Stomach (tissue), 19 donors: ENCODE measurements at regions of chr3 and their contacts with region 1.

Region 1: DNA sequence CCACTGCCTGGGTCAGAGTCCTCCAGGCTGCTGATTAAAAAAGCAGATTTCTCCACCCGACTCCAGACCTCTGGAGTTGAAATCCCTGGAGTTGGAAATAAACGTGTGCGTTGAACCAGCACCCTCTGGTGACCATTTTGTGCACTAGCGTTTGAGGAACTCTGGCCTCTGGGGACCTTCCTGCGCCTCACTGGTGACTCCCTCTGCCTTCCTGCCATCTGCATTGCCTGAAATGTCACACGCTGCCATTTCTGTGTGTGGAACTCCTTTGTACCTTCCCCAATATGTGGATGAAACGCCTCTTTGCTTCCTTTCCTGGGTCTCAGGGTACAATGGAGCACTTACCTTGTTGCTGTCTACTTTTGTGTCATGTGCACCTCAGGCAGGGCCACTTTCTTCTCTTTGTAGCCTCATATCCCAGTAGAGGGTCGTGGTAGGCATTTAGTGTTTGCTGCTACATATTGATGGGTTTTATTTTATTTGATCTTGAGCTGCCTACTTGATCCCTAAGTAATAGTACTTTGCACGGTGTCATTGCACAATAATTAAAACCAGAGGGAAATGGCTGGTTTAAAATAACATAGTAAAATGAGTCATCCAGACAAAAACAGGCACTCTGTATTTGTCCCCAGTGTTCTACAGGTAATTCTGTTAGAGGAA is 56.8 kb downstream of the GPR171 start:
- DNase-seq: peak; percentile 72 to 94
- H3K4me3 ChIP-seq: no peak overlapping the region
- H3K27ac ChIP-seq: no peak overlapping the region
- H3K4me1 ChIP-seq: peaks cover 0 to 18% (median 6%) of the 10 kb centered on the region in 4 donors
- H3K27me3 ChIP-seq: no peaks in the 10 kb centered on the region
- CTCF ChIP-seq: peak in 5 of 7 experiments; percentile 79 to 84 (median 81)
- EP300 ChIP-seq: no peak
- POLR2A ChIP-seq: no peak

Region 2: GRCh38 chr3:150787741-150788370 is 358.3 kb before region 1 on chr3:
- intact Hi-C with region 1: loop called (anchors 10 kb)
- DNase-seq: peak; percentile 88 to 92
- H3K4me3 ChIP-seq: no peak overlapping the region
- H3K27ac ChIP-seq: no peak overlapping the region
- H3K4me1 ChIP-seq: peaks cover 0 to 8% (median 3%) of the 10 kb centered on the region in 4 donors
- H3K27me3 ChIP-seq: no peaks in the 10 kb centered on the region
- CTCF ChIP-seq: peak in 5 of 7 experiments; percentile 79 to 86 (median 86)
- EP300 ChIP-seq: no peak
- POLR2A ChIP-seq: no peak

Region 3: GRCh38 chr3:150925751-150926201 is 220.4 kb before region 1 on chr3:
- intact Hi-C with region 1: loop called (anchors 5 kb)
- DNase-seq: peak; percentile 61 to 76
- H3K4me3 ChIP-seq: peak overlapping the region in 3 of 4 donors; percentile 11 to 28 (median 20)
- H3K27ac ChIP-seq: no peak overlapping the region
- H3K4me1 ChIP-seq: peaks cover 0 to 5% (median 0%) of the 10 kb centered on the region in 4 donors
- H3K27me3 ChIP-seq: peaks cover 0 to 8% (median 0%) of the 10 kb centered on the region in 3 donors
- CTCF ChIP-seq: peak in 5 of 7 experiments; percentile 26 to 67 (median 60)
- EP300 ChIP-seq: no peak
- POLR2A ChIP-seq: no peak

Region 4: GRCh38 chr3:151086484-151087456 is 59.4 kb before region 1 on chr3:
- intact Hi-C with region 1: no loop called
- DNase-seq: peak; percentile 67 to 95
- H3K4me3 ChIP-seq: peak overlapping the region; percentile 54 to 83 (median 64)
- H3K27ac ChIP-seq: peak overlapping the region in 2 of 5 donors; percentile 15 to 47
- H3K4me1 ChIP-seq: peaks cover 12 to 28% (median 25%) of the 10 kb centered on the region in 4 donors
- H3K27me3 ChIP-seq: peaks cover 0 to 48% (median 20%) of the 10 kb centered on the region in 3 donors
- CTCF ChIP-seq: peak in 4 of 7 experiments; percentile 6 to 34 (median 13)
- EP300 ChIP-seq: no peak
- POLR2A ChIP-seq: no peak

Region 5: GRCh38 chr3:151468284-151468917 is 322.2 kb after region 1 on chr3:
- intact Hi-C with region 1: no loop called
- DNase-seq: peak; percentile 48 to 78
- H3K4me3 ChIP-seq: no peak overlapping the region
- H3K27ac ChIP-seq: no peak overlapping the region
- H3K4me1 ChIP-seq: no peaks in the 10 kb centered on the region
- H3K27me3 ChIP-seq: no peaks in the 10 kb centered on the region
- CTCF ChIP-seq: peak in 5 of 7 experiments; percentile 33 to 86 (median 67)
- EP300 ChIP-seq: no peak
- POLR2A ChIP-seq: no peak